B cell (primary cell): ENCODE measurements at regions of chr3 and their contacts with region 1.

Region 1: GRCh38 chr3:354432-354831 is 157.9 kb downstream of the CHL1 start:
- DNase-seq: peak; percentile 80
- ATAC-seq: peak; percentile 62
- H3K4me3 ChIP-seq: no peak overlapping the region
- H3K4me3 Mint-ChIP-seq: no peak overlapping the region
- H3K27ac ChIP-seq: no peak overlapping the region
- H3K27ac Mint-ChIP-seq: peak overlapping the region; percentile 7
- H3K4me1 ChIP-seq: peaks cover 14 to 16% of the 10 kb centered on the region in 2 donors
- H3K4me1 Mint-ChIP-seq: peaks cover 15% of the 10 kb centered on the region
- H3K27me3 ChIP-seq: no peaks in the 10 kb centered on the region
- H3K27me3 Mint-ChIP-seq: no peaks in the 10 kb centered on the region
- CTCF ChIP-seq: peak; percentile 85

Region 2: GRCh38 chr3:46576-46975 is 307.9 kb before region 1 on chr3:
- CTCF ChIA-PET with region 1: interaction called, 347 read pairs
- POLR2A ChIA-PET with region 1: no interaction called
- intact Hi-C with region 1: loop called (anchors 1 kb)
- DNase-seq: no peak
- ATAC-seq: no peak
- H3K4me3 ChIP-seq: no peak overlapping the region
- H3K4me3 Mint-ChIP-seq: no peak overlapping the region
- H3K27ac ChIP-seq: no peak overlapping the region
- H3K27ac Mint-ChIP-seq: no peak overlapping the region
- H3K4me1 ChIP-seq: no peaks in the 10 kb centered on the region
- H3K4me1 Mint-ChIP-seq: peaks cover 2% of the 10 kb centered on the region
- H3K27me3 ChIP-seq: peaks cover 0 to 6% (median under 1%) of the 10 kb centered on the region in 4 experiments
- H3K27me3 Mint-ChIP-seq: peaks cover 10% of the 10 kb centered on the region
- CTCF ChIP-seq: no peak

Region 3: GRCh38 chr3:192215-192929 is 162.1 kb before region 1 on chr3:
- CTCF ChIA-PET with region 1: interaction called, 7 read pairs
- POLR2A ChIA-PET with region 1: no interaction called
- intact Hi-C with region 1: loop called (anchors 5 kb)
- DNase-seq: peak; percentile 49
- ATAC-seq: peak; percentile 43
- H3K4me3 ChIP-seq: no peak overlapping the region
- H3K4me3 Mint-ChIP-seq: no peak overlapping the region
- H3K27ac ChIP-seq: no peak overlapping the region
- H3K27ac Mint-ChIP-seq: peak overlapping the region; percentile 46
- H3K4me1 ChIP-seq: peaks cover 15% of the 10 kb centered on the region in 2 donors
- H3K4me1 Mint-ChIP-seq: peaks cover 10% of the 10 kb centered on the region
- H3K27me3 ChIP-seq: peaks cover 0 to 11% (median 6%) of the 10 kb centered on the region in 4 experiments
- H3K27me3 Mint-ChIP-seq: peaks cover 12% of the 10 kb centered on the region
- CTCF ChIP-seq: no peak

Region 4: DNA sequence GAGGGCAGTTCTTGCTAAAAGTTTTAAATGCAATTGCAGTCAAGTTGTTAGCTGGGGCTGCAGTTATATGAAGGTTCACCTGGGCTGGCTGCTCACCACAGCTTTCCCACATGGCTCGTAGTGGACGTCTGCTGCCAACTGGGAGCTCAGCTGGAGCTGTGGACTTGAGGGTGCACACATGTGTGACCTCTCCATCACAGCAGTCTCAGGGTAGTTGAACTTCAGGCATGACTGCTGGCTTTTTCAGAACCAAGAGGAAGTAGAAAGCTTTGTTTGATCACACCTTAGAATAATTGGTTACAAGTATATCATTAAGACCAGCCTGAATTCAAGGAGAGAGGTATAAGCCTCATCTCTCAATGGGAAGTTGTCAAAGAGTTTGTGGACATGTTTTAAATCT is 83.7 kb before region 1 on chr3:
- CTCF ChIA-PET with region 1: interaction called, 16 read pairs
- POLR2A ChIA-PET with region 1: no interaction called
- intact Hi-C with region 1: no loop called
- DNase-seq: peak; percentile 52
- ATAC-seq: peak; percentile 51
- H3K4me3 ChIP-seq: peak overlapping the region in 1 of 5 experiments; percentile 19
- H3K4me3 Mint-ChIP-seq: peak overlapping the region; percentile 62
- H3K27ac ChIP-seq: peak overlapping the region in 1 of 2 donors; percentile 42
- H3K27ac Mint-ChIP-seq: peak overlapping the region; percentile 17
- H3K4me1 ChIP-seq: peaks cover 36 to 54% of the 10 kb centered on the region in 2 donors
- H3K4me1 Mint-ChIP-seq: peaks cover 66% of the 10 kb centered on the region
- H3K27me3 ChIP-seq: no peaks in the 10 kb centered on the region
- H3K27me3 Mint-ChIP-seq: no peaks in the 10 kb centered on the region
- CTCF ChIP-seq: no peak

Region 5: DNA sequence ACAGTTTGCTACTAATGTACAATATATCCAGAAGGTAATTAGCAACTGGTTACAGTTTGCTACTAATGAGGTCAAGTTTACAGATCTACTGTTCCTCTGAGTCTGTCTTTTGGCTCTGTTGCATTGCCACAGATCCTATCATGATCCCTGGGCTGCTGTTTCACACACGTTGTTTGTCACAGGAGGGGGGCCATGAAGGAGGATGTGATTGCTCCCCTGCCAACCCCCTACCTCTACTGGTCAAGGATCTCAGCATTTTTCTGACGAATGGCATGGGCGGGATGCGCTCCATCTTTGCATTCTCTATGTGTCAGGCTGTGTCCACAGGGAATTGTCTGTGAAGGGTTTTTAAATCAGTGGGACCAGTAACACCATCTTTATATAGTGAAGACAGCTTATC is 66.0 kb before region 1 on chr3:
- CTCF ChIA-PET with region 1: interaction called, 13 read pairs
- POLR2A ChIA-PET with region 1: no interaction called
- intact Hi-C with region 1: no loop called
- DNase-seq: no peak
- ATAC-seq: no peak
- H3K4me3 ChIP-seq: no peak overlapping the region
- H3K4me3 Mint-ChIP-seq: no peak overlapping the region
- H3K27ac ChIP-seq: no peak overlapping the region
- H3K27ac Mint-ChIP-seq: no peak overlapping the region
- H3K4me1 ChIP-seq: peaks cover 21 to 28% of the 10 kb centered on the region in 2 donors
- H3K4me1 Mint-ChIP-seq: peaks cover 25% of the 10 kb centered on the region
- H3K27me3 ChIP-seq: no peaks in the 10 kb centered on the region
- H3K27me3 Mint-ChIP-seq: no peaks in the 10 kb centered on the region
- CTCF ChIP-seq: no peak